ENCODE measurements at regions of chr17 and their contacts with region 1.

Region 1: DNA sequence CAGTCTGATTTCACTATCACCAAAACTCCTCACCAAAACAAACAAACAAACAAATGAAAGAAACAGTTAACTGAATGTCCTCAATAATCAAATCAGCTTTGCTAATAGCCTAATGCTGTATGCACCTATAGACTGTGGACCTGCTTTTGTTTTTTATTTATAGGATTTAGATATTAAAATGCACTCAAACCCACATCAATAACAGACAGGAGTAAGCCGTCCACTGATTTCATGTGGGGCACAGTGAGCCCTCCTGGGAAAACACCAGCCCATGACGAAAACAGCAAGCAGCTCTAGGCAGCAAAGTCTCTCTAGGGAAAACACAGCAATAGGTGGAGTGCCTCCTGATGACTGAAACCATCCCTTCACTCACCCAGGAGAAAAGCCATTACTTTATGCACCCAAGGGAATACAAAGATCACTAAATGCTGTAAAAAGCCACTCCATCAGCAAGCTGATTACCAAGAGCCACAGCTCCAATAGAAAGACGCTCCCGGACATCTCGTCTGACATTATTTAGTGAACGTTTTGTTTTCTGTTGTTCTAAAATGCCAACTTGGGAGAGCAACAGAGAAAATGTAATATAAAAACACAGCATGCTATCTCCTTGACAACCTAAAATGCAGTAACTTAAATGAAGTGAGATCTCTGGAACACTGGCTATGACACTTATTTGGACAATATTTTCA is 47.8 kb downstream of the ANKFY1 start:
- DNase-seq: no peak

Region 2: DNA sequence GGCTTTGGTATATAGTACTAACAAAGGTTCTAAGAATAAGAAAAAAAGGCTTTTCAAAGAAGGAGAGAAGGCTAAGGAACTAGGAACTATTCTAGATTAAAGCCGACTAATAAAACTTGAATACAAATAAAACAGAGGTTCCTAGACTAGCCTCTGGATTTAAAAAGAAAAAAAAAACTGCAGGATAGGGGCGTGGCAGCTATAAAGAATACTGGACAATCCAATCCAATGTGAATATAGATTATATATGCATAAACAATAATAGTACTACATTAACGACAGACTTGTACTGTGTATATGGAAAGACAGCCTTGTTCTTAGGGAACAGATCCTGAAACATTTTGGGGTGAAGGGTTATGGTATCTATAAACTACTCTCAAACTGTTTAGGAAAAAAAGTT is 71.7 kb after region 1 on chr17:
- intact Hi-C with region 1: no loop called
- DNase-seq: no peak

Region 3: DNA sequence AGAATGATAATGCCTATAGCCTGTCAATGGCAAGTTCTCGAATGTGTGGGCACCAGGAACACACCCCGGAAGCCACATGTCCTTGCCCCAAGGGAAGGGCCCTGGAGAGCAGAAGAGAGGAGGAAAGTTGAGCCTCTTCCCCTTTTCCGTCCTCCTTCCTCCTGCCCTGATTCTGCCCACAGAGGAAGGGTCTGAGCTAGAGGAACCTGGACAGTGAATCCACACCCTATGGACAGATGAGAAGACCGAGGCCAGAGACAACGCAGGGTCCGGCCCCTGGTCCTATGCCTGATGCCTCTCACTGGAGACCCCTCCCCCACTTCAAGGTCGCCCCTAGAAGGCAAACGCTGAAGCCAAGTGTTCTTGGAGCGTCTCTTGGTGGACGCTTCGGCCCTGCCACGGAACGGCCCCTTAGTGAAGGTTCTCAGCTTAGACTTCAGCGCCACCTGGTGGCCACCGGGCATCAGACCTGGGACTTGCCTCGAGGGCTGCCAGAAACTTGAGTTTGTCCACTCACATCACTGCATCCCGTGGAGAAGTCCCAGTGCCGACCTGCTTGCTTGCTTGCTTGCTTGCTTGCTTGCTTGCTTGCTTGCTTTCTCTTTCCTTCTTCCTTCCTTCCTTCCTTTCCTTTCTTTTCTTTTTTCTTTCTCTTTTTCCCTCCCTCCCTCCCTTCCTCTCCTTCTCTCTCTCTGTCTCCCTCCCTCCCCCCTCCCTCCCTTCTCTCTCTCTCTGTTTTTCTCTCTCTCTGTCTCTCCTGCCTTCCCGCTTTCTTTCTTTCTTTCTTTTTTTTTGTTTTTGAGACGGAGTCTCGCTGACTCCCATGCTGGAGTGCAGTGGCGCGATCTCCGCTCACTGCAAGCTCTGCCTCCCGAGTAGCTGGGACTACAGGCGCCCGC is 197.2 kb after region 1 on chr17:
- intact Hi-C with region 1: loop called (anchors 2 kb)
- DNase-seq: peak; percentile 86 to 98 (median 93)

Measured in head of caudate nucleus (tissue), 42 donors.